ENCODE measurements at regions of chr20 and their contacts with region 1.

Region 1: GRCh38 chr20:45138561-45139300 is 14.5 kb upstream of the WFDC12 start:
- DNase-seq: peak; percentile 93
- H3K4me3 ChIP-seq: no peak overlapping the region
- H3K27ac ChIP-seq: peak overlapping the region; percentile 62
- H3K4me1 ChIP-seq: no peaks in the 10 kb centered on the region
- H3K27me3 ChIP-seq: no peaks in the 10 kb centered on the region
- CTCF ChIP-seq: peak; percentile 72

Region 2: DNA sequence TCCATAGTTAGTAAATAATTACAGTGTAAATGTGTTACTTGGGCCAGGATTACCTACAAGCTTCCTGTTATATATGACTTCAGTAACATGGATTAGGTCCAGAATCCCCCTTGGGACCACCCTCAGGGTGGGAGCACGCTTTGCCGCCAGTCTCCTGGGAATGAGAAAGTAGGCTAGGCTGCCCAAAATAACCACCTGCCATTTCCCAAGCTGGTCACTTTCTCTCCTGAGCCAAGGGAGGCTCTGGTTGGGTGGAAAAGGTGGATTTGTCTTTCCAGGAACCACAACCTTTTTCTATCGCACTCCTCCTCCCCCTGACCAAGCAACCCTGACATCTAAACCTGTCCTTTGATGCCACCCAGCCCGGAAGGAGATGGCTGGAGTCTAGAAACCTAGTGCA is 318.8 kb before region 1 on chr20:
- intact Hi-C with region 1: no loop called
- DNase-seq: no peak
- H3K4me3 ChIP-seq: no peak overlapping the region
- H3K27ac ChIP-seq: no peak overlapping the region
- H3K4me1 ChIP-seq: no peaks in the 10 kb centered on the region
- H3K27me3 ChIP-seq: no peaks in the 10 kb centered on the region
- CTCF ChIP-seq: no peak

Region 3: GRCh38 chr20:44979090-44979621 is 159.6 kb before region 1 on chr20:
- intact Hi-C with region 1: no loop called
- DNase-seq: peak; percentile 53
- H3K4me3 ChIP-seq: no peak overlapping the region
- H3K27ac ChIP-seq: peak overlapping the region; percentile 62
- H3K4me1 ChIP-seq: no peaks in the 10 kb centered on the region
- H3K27me3 ChIP-seq: no peaks in the 10 kb centered on the region
- CTCF ChIP-seq: no peak

Region 4: DNA sequence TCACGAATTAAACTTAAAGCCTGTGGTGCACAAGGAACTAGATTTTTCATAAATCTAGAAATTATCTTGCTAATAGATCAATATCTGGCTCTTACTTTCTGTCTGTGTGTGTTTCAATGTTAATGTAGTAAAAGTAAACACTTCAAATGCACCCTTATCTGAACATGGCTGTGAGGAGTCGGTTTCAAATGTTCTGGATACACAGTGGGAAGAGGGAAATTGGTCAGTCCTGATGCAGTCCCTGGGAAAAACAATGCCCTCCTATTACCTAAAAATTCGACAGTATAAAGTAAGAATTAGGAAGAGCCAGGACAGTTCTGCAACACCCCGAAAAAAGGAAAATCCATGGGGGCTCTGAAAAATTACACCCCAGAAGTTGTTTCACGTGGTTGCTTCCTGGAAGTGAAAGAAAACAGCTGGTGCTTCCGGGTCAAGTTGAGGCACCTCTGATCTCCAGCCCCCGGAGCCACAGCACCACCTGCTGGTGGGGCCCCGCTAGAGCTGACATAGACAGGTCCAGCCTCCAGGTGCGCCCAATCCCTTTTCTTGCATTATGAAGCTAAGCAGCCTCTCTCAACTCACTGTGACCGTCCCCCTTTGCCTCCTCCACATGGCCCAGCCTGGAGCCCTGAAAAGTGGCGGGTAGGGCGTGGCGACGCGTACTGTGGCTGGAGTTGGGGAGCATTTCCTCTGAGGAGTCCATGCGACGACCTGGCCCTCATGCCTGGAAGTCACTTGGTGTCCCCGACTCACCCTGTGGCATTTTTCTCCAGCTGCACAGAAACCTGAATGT is 90.7 kb after region 1 on chr20:
- intact Hi-C with region 1: loop called (anchors 5 kb)
- DNase-seq: peak; percentile 88
- H3K4me3 ChIP-seq: no peak overlapping the region
- H3K27ac ChIP-seq: no peak overlapping the region
- H3K4me1 ChIP-seq: no peaks in the 10 kb centered on the region
- H3K27me3 ChIP-seq: no peaks in the 10 kb centered on the region
- CTCF ChIP-seq: peak; percentile 73